ENCODE measurements at regions of chr6 and their contacts with region 1.

Region 1: DNA sequence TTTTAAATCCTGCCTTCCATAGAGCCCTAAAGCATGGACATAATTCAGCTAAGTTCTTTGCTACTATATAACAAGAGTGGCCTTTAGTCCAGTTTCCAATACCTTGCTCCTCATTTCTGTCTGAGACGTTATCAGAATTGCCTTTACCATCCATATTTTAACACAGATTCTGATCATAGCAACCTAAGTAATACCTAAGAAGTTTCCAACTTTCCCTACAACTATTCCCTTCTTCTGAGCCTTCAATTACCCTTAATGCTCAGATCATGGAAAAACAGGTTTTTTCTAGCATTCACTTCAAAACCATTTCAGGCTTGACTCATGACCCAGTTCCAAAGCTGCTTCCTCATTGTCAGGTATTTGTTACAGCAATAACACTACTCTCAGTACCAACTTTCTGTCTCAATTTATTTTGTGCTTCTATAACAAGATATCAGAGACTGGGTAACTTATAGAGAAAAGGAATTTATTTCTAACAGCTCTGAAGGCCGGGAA is 367.1 kb downstream of the C6orf118 start:
- DNase-seq: no peak
- ATAC-seq: no peak
- H3K4me3 ChIP-seq: no peak overlapping the region
- H3K27ac ChIP-seq: no peak overlapping the region
- H3K4me1 ChIP-seq: no peaks in the 10 kb centered on the region
- CTCF ChIP-seq: no peak
- EP300 ChIP-seq: no peak
- POLR2A ChIP-seq: no peak
- RAD21 ChIP-seq: no peak

Region 2: GRCh38 chr6:164927288-164928056 is 14.8 kb before region 1 on chr6:
- CTCF ChIA-PET with region 1: interaction called, 14 read pairs
- POLR2A ChIA-PET with region 1: no interaction called
- DNase-seq: peak; percentile 13 to 43
- ATAC-seq: peak; percentile 97 to 98
- H3K4me3 ChIP-seq: no peak overlapping the region
- H3K27ac ChIP-seq: no peak overlapping the region
- H3K4me1 ChIP-seq: no peaks in the 10 kb centered on the region
- CTCF ChIP-seq: peak; percentile 74
- EP300 ChIP-seq: no peak
- POLR2A ChIP-seq: no peak
- RAD21 ChIP-seq: peak; percentile 79 to 86

Measured in A549 (cell line).